Lower leg skin (tissue), 4 donors: ENCODE measurements at regions of chr6 and their contacts with region 1.

Region 1: DNA sequence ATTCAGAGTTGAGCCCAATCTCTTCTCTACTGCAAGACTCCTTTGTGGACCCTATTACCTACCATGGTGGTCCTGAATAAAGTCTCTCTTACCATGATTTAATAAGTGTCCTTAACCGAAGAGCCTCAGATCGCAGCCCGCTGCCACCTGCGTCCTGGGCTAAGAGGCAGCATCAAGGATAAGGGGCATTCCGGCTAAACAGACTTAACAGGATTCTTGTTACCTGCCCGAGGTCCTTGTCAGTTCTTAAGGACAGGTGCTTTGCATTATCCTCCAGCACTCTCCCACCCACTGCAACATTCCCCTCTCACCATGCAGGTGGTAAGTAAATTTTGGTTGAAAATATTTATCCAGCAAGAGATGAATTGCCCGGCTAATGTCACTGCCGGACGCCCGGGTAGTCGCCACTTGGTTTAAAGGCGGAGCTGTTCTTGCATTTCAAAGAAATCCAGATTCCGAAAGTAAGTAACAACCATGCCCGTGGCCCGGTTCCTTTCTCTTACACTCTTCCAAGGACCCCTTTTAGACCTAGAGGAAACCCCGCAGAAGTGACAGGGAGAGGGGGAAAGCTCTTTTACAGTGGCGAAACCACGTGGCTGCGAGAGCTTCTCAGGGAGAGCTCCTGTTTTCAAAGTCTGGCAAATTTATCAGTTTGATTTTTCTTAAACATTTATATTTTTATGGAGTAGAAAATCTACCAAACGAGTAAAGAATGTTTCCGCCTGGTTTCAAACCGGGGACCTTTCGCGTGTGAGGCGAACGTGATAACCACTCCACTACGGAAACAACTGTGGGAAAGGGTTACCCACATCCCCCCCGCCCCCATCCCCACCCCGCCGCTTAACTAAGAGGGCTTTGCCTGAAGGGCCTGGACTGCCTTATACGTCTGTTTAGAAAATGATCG is 41.9 kb upstream of the PRSS16 start:
- DNase-seq: no peak
- H3K4me3 ChIP-seq: no peak overlapping the region
- CTCF ChIP-seq: no peak
- POLR2A ChIP-seq: no peak

Region 2: DNA sequence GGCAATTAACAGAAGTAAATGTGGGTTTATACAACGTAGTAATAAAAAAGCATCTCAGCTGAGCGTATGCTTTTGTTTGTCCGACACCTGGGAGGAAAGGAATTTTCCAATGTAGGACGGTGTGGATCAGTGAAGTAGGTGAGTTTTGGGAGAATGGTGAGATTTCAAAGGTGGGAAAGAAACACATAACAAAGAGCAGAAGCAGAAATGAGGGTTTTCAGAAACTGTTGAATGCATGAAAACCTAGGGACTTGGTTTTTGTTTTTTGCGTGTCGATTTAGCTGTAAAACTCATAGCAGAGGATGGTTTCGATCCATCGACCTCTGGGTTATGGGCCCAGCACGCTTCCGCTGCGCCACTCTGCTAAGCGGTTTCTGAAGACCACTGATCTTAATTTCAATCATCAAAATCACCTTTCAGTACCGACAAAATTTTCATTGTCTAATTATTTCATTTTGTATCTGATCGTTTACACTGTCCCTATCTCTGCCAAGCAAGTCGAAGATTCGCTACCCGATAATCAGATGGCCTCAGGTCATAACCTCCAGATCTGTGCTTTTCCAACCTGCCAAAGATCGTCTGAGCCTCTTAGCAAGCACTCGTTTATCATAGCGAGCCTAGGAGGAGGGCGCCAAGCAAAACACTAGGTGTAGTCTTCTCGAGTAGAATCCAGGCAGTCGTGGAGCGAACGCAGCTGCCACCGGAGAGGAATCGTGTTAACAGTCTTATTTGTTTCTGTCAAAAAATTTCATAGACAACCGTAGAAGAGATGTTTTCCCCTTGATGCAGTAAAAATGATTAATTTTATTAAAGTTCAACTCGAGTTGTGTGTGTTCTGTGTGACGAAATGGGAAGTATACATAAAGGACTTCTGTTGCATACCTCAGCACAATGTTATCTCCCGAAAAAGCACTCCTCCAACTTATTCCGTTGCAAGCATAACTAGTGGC is 127.3 kb after region 1 on chr6:
- intact Hi-C with region 1: loop called (anchors 10 kb)
- DNase-seq: no peak
- H3K4me3 ChIP-seq: no peak overlapping the region
- CTCF ChIP-seq: no peak
- POLR2A ChIP-seq: no peak

Region 3: DNA sequence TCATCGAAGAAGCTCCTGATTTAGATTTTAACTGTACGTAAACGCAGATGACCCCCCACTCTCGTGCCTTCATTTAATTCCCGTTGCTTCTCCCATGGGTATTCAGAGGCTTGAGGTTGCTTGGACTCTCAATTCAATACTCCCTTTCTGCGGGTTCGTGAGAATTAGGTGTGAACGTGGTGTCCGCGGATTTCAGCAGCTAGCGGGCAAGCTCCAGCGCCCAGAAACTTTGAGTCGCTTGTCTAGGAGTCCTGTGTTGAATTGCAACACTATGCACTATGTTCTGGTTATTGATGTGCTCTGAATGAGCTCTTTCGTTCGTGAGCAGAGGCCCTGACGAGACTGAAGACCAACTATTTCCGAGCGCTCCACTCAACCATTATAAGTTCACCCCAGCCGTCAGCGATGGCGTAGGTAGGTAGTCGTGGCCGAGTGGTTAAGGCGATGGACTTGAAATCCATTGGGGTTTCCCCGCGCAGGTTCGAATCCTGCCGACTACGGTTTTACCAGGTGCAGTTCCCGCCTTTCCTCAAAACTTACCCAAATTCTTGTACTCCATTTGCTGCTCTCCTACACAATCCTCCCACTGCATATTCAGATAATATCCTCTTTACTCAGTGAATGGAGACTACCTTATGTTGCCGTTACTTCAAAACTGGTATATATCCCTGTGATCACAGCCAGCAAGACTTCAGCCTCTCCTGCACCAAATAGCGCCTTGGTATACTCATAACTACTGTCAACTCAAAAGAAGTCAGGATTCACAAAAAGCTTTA is 339.8 kb after region 1 on chr6:
- intact Hi-C with region 1: no loop called
- DNase-seq: no peak
- H3K4me3 ChIP-seq: no peak overlapping the region
- CTCF ChIP-seq: no peak
- POLR2A ChIP-seq: no peak